Ascending aorta (tissue), 2 donors: ENCODE measurements at regions of chr6 and their contacts with region 1.

Region 1: GRCh38 chr6:109440331-109441068 is at the starts of genes PPIL6 and SMPD2:
- DNase-seq: peak in 1 of 2 donors; percentile 93
- H3K4me3 ChIP-seq: peak within 1 kb of the TSS; percentile 70 to 84
- H3K27ac ChIP-seq: peak within 1 kb of the TSS; percentile 77 to 81
- H3K4me1 ChIP-seq: peaks cover 0 to 10% of the 10 kb centered on the region in 2 donors
- H3K27me3 ChIP-seq: no peaks in the 10 kb centered on the region
- CTCF ChIP-seq: peak; percentile 25 to 39 (median 32)
- total RNA-seq, gene PPIL6: 0.11 TPM
- total RNA-seq, gene SMPD2: 14.2 TPM

Region 2: GRCh38 chr6:109187399-109188114 is 252.9 kb before region 1 on chr6:
- intact Hi-C with region 1: loop called (anchors 5 kb)
- DNase-seq: peak in 1 of 2 donors; percentile 73
- H3K4me3 ChIP-seq: no peak overlapping the region
- H3K27ac ChIP-seq: no peak overlapping the region
- H3K4me1 ChIP-seq: no peaks in the 10 kb centered on the region
- H3K27me3 ChIP-seq: no peaks in the 10 kb centered on the region
- CTCF ChIP-seq: peak; percentile 86 to 98 (median 96)

Region 3: DNA sequence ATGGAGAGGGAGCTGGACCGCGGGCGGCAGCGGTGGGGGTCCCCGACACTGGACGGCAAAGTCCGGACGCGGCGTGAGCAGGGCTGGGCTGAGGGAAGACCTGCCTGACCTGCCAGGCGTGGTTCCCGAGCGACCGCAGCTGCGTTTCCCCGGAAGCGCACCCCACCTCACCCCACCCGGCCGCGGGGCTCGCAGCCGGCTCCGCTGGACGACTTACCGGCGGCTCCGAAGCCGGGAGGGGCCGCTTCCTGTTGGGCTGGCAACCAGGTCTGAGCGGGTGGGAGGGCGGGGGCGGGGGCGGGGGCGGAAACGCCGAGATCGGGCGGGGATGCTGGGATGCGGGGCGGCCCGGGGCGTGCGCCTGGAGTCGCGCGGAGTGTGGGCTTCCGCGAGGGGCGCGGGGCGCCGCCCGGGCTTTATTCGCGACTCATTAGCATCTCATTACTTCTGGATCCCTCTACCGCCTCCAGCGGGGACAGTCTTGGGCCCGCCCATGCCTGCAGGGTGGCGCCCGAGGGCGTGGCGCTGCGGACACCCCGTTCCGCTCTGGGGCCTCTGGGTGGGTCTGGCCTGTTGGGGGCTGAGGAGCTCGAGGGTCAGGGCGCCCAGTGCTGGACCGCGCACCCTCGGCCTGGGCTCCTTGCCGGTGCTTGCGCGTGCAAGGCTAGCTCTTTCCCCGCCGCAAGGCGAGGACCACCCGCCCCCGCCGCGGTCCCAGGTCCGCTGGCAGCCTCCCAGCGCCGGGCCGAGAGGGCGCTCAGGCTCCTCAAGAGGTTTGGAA is 15.2 kb after region 1 on chr6 and contains the start of gene MICAL1:
- intact Hi-C with region 1: loop called (anchors 1 kb)
- DNase-seq: peak in 1 of 2 donors; percentile 88
- H3K4me3 ChIP-seq: peak within 1 kb of the TSS; percentile 79 to 82
- H3K27ac ChIP-seq: peak within 1 kb of the TSS; percentile 84 to 88
- H3K4me1 ChIP-seq: peaks cover 14 to 20% of the 10 kb centered on the region in 2 donors
- H3K27me3 ChIP-seq: no peaks in the 10 kb centered on the region
- CTCF ChIP-seq: peak; percentile 22 to 45 (median 31)
- total RNA-seq, gene MICAL1: 55.6 TPM

Region 4: GRCh38 chr6:109482905-109483735 is 42.6 kb after region 1 on chr6 and contains the start of gene ZBTB24:
- intact Hi-C with region 1: loop called (anchors 1 kb)
- DNase-seq: peak; percentile 61 to 94
- H3K4me3 ChIP-seq: peak within 1 kb of the TSS; percentile 88 to 99
- H3K27ac ChIP-seq: peak within 1 kb of the TSS; percentile 78 to 81
- H3K4me1 ChIP-seq: peaks cover 8 to 31% of the 10 kb centered on the region in 2 donors
- H3K27me3 ChIP-seq: no peaks in the 10 kb centered on the region
- CTCF ChIP-seq: peak in 1 of 3 experiments; percentile 14
- total RNA-seq, gene ZBTB24: 10.2 TPM